Prostate gland (tissue), 2 donors: ENCODE measurements at regions of chr7 and their contacts with region 1.

Region 1: GRCh38 chr7:65981965-65982792 is at the start of gene GUSB:
- DNase-seq: peak; percentile 87
- H3K4me3 ChIP-seq: peak within 1 kb of the TSS; percentile 71 to 78
- H3K27ac ChIP-seq: peak within 1 kb of the TSS; percentile 64 to 66
- H3K4me1 ChIP-seq: peaks cover 4% of the 10 kb centered on the region
- H3K27me3 ChIP-seq: no peaks in the 10 kb centered on the region
- CTCF ChIP-seq: peak in 1 of 4 experiments; percentile 23
- POLR2A ChIP-seq: peak; percentile 76
- total RNA-seq, gene GUSB: 33.7 to 35.9 TPM

Region 2: DNA sequence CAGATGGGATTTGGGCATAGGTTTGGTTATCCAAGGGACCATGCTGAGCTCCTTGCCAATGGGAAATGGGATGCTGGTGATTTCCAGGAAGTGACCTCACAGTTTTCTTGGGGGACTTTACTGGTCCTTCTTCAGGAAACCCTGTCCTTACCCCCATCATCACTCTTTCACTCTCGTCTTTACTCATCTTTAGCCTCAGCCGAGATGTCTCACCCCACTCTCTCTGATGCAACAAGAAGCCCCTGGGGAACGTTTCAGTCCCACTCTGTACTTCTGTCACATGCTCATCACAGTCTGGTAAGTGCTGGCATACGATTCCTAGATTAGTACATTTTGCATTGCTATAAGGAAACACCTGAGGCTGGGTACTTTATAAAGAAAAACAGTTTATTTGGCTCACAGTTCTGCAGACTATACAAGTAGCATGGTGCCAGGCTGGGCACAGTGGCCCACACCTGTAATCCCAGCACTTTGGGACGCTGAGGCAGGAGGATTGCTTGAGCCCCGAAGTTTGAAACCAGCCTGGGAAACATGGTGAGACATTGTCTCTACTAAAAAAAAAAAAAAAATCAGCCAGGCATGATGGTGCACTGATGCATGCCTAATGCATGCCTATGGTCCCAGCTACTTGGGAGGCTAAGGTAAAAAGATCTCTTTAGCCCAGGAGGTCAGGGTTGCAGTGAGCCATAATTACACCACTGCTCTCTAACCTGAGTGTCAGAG is 172.8 kb before region 1 on chr7:
- intact Hi-C with region 1: no loop called
- DNase-seq: no peak
- H3K4me3 ChIP-seq: no peak overlapping the region
- H3K27ac ChIP-seq: no peak overlapping the region
- H3K4me1 ChIP-seq: no peaks in the 10 kb centered on the region
- H3K27me3 ChIP-seq: no peaks in the 10 kb centered on the region
- CTCF ChIP-seq: no peak
- POLR2A ChIP-seq: no peak

Region 3: DNA sequence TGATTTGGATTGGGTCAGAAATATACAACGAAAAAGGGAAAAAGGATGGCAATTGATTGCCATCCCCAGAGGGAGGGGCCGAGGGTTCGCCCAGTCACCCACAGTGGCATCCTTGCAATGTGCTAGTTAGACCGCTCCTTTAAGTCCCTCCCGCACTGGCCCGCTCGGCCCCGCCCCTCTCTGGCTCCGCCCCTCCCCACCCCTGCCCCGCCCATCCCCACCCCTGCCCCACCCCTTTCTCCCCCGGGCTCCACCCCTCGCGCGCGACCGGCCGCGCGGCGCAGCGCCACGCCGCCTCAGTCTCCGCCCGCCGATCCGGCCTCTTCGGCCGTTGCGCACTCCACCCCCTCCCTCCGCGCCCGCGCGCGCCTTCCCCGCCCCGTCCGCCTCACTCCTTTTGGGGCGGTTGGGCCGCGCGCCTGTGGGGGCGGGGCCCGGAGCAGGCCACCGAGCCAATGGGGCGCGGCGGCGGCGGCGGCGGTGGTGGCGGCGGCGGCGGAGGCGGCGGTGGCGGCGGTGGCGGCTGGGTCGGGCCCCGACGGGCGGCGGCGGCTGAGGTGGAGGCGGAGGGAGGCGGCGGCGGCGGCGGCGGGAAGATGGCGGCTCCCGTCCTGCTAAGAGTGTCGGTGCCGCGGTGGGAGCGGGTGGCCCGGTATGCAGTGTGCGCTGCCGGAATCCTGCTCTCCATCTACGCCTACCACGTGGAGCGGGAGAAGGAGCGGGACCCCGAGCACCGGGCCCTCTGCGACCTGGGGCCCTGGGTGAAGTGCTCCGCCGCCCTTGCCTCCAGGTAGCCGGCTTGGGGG is 109.2 kb before region 1 on chr7 and contains the start of gene VKORC1L1:
- intact Hi-C with region 1: loop called (anchors 10 kb)
- DNase-seq: peak; percentile 93
- H3K4me3 ChIP-seq: peak within 1 kb of the TSS; percentile 82 to 89
- H3K27ac ChIP-seq: peak within 1 kb of the TSS; percentile 64 to 72
- H3K4me1 ChIP-seq: no peaks in the 10 kb centered on the region
- H3K27me3 ChIP-seq: no peaks in the 10 kb centered on the region
- CTCF ChIP-seq: no peak
- POLR2A ChIP-seq: peak; percentile 32
- total RNA-seq, gene VKORC1L1: 10.7 to 17.3 TPM

Region 4: DNA sequence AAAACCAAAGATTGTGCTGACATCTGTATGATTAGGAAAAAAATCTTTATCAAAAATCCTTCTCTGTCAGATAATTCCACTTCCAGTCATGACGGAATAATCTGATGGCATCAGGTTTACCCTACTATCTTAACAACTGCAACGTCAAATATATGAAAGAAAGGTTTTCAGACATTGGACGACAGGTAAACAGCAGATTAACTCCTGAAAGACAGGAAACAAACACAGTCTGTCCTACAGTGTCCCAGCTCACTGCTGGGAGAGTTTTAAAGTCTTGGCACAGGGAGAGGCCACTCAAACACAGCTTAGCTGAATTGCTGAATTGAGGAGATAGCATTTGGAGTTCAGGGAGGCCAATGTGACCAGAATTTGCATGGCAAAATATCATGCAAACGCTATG is 460.2 kb after region 1 on chr7:
- intact Hi-C with region 1: no loop called
- DNase-seq: no peak
- H3K4me3 ChIP-seq: no peak overlapping the region
- H3K27ac ChIP-seq: no peak overlapping the region
- H3K4me1 ChIP-seq: no peaks in the 10 kb centered on the region
- H3K27me3 ChIP-seq: no peaks in the 10 kb centered on the region
- CTCF ChIP-seq: no peak
- POLR2A ChIP-seq: no peak